Activated CD4-positive, alpha-beta T cell treated with anti-CD3 and anti-CD28 coated beads for 36 hours (primary cell): ENCODE measurements at regions of chr3 and their contacts with region 1.

Region 1: DNA sequence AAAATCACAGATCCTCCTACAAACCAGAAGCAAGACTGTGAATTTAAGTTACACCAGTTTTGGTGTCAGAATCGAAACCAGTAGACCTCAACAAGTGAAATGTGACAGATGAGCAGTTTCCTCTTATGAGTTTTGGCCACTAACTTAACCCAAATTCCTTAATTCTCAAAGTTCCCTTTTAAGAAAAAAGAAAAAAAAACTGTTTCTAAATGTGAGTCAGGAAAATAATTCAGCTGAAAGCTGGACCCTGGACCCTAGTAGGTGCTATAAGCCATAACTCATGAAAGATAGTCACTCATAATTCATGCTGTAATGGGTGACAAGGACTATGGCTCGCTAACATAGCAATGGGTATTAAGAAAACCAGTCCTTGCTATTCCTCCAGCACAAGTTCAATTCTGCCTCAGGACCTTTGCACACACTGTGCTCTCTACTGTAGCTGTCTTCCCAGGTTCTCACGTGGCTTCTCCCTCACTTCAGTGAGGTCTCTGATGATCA is 9.0 kb upstream of the THRB start:
- DNase-seq: no peak
- ATAC-seq: peak; percentile 37
- H3K4me3 Mint-ChIP-seq: no peak overlapping the region
- H3K27ac Mint-ChIP-seq: no peak overlapping the region
- H3K4me1 Mint-ChIP-seq: peaks cover 11% of the 10 kb centered on the region
- H3K27me3 Mint-ChIP-seq: peaks cover 17% of the 10 kb centered on the region

Region 2: DNA sequence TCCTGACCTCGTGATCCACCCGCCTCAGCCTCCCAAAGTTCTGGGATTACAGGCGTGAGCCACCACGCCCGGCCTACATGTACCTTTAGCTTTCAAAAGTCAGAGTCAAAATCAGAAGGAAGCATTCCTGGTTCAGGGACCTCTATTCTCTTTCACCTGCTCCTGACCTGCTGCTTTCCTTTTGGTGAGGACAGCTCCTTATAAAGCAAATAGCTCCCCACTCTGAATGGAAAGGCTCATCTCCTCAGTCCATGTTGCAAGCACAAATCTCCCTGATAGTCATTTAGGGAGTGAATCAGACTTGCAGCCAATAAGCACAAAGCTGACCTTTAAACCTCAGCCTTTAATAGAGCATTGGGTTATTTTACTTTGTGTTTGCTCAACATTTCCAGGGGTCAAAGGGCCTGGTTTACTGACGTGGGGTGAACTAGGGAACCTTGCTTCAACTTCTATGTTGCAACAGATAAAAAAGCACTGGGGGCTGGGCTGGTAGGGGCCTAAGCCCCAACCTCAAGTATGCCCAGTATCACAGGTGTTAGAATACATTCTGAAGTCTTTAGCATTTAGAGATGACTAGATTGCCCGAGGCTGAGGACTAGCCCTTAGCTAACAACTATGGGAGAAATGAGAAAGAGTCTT is 52.1 kb before region 1 on chr3:
- CTCF ChIA-PET with region 1: no interaction called
- POLR2A ChIA-PET with region 1: no interaction called
- intact Hi-C with region 1: loop called in 1 of 2 experiments (anchors 5 kb)
- DNase-seq: no peak
- ATAC-seq: no peak
- H3K4me3 Mint-ChIP-seq: no peak overlapping the region
- H3K27ac Mint-ChIP-seq: no peak overlapping the region
- H3K4me1 Mint-ChIP-seq: no peaks in the 10 kb centered on the region
- H3K27me3 Mint-ChIP-seq: peaks cover 2% of the 10 kb centered on the region

Region 3: GRCh38 chr3:24490151-24490550 is 13.5 kb before region 1 on chr3:
- CTCF ChIA-PET with region 1: no interaction called
- POLR2A ChIA-PET with region 1: no interaction called
- intact Hi-C with region 1: no loop called
- DNase-seq: no peak
- ATAC-seq: no peak
- H3K4me3 Mint-ChIP-seq: no peak overlapping the region
- H3K27ac Mint-ChIP-seq: no peak overlapping the region
- H3K4me1 Mint-ChIP-seq: peaks cover 2% of the 10 kb centered on the region
- H3K27me3 Mint-ChIP-seq: peaks cover 34% of the 10 kb centered on the region

Region 4: DNA sequence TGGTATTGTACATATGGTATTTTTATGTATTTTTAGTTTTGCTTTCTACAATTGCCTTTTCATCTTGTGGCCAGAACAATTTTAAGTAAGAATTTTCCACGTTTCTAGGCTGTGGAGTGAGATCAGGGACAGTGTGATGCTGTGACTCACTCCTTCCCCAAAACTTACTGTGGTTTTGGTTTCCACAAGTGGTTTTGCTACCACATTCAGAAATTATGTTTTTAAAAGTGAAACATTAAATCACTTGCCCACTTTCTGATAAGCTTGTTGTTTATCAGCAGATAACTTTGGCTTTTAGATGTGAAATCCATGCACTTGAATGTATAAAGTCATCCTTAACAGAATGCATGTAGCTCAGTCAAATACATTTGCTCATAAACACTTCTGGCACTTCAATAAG is 183.1 kb after region 1 on chr3:
- CTCF ChIA-PET with region 1: no interaction called
- POLR2A ChIA-PET with region 1: no interaction called
- intact Hi-C with region 1: loop called in 1 of 2 experiments (anchors 5 kb)
- DNase-seq: peak; percentile 47
- ATAC-seq: peak; percentile 65
- H3K4me3 Mint-ChIP-seq: no peak overlapping the region
- H3K27ac Mint-ChIP-seq: no peak overlapping the region
- H3K4me1 Mint-ChIP-seq: peaks cover 3% of the 10 kb centered on the region
- H3K27me3 Mint-ChIP-seq: peaks cover 21% of the 10 kb centered on the region